CD4-positive, alpha-beta T cell (primary cell): ENCODE measurements at regions of chr2 and their contacts with region 1.

Region 1: DNA sequence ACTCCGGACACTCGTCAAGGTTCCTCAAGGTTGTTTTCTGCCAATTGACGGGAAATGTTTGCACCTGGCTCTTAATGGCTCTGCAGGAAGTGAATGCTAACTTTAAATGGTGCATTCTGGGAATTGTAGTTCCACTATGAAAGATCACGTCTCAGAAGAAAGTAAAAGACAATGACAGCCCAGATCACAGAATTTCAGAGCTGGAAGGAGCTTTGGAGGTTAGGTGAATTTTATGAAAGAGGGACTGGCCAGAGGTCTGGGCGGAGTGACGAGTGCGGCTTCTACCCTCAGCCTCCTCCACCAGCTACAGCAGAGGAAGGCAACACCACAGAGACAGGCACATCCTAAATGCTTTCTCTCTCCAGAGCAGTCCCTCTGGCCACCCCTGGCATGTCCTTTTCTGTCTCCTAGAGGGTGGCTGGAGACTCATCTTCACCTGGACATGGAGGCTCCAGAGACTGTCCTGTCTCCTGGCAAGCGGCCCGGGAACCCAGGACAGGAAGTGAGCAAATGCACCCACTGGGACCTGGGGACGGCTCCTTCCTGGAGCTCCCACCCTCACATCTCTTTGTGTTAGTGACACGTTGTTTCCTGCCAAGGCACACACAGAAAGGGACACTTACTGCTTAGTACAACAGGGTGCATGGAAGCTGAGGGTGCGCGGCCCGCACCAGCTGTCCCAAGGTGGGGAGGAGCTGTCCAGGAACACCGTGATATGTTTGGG is 19.4 kb downstream of the THAP4 start:
- DNase-seq: peak in 8 of 14 experiments; percentile 17 to 81 (median 44)
- ATAC-seq: peak; percentile 84
- H3K4me3 ChIP-seq: peak overlapping the region; percentile 61
- H3K4me3 Mint-ChIP-seq: peak overlapping the region; percentile 88
- H3K27ac ChIP-seq: peak overlapping the region; percentile 58 to 75
- H3K27ac Mint-ChIP-seq: peak overlapping the region; percentile 77
- H3K4me1 ChIP-seq: peaks cover 26% of the 10 kb centered on the region
- H3K4me1 Mint-ChIP-seq: peaks cover 30% of the 10 kb centered on the region
- H3K27me3 ChIP-seq: no peaks in the 10 kb centered on the region
- H3K27me3 Mint-ChIP-seq: no peaks in the 10 kb centered on the region
- CTCF ChIP-seq: no peak

Region 2: GRCh38 chr2:241686649-241687425 is 69.2 kb after region 1 on chr2 and contains the start of gene DTYMK:
- CTCF ChIA-PET with region 1: no interaction called
- POLR2A ChIA-PET with region 1: interaction called, 15 read pairs
- intact Hi-C with region 1: no loop called
- DNase-seq: peak; percentile 89 to 98 (median 95)
- ATAC-seq: peak; percentile 90
- H3K4me3 ChIP-seq: peak within 1 kb of the TSS; percentile 84
- H3K4me3 Mint-ChIP-seq: peak within 1 kb of the TSS; percentile 95
- H3K27ac ChIP-seq: peak within 1 kb of the TSS; percentile 60 to 85
- H3K27ac Mint-ChIP-seq: peak within 1 kb of the TSS; percentile 84
- H3K4me1 ChIP-seq: peaks cover 37% of the 10 kb centered on the region
- H3K4me1 Mint-ChIP-seq: peaks cover 38% of the 10 kb centered on the region
- H3K27me3 ChIP-seq: no peaks in the 10 kb centered on the region
- H3K27me3 Mint-ChIP-seq: no peaks in the 10 kb centered on the region
- CTCF ChIP-seq: no peak
- total RNA-seq, gene DTYMK: 4.8 to 6.0 TPM